ENCODE measurements at regions of chr7 and their contacts with region 1.

Region 1: GRCh38 chr7:134908289-134908688 is 78.0 kb upstream of the AGBL3 start:
- DNase-seq: no peak
- H3K4me3 Mint-ChIP-seq: no peak overlapping the region
- H3K27ac Mint-ChIP-seq: no peak overlapping the region
- H3K4me1 Mint-ChIP-seq: peaks cover 29% of the 10 kb centered on the region
- H3K27me3 Mint-ChIP-seq: no peaks in the 10 kb centered on the region

Region 2: DNA sequence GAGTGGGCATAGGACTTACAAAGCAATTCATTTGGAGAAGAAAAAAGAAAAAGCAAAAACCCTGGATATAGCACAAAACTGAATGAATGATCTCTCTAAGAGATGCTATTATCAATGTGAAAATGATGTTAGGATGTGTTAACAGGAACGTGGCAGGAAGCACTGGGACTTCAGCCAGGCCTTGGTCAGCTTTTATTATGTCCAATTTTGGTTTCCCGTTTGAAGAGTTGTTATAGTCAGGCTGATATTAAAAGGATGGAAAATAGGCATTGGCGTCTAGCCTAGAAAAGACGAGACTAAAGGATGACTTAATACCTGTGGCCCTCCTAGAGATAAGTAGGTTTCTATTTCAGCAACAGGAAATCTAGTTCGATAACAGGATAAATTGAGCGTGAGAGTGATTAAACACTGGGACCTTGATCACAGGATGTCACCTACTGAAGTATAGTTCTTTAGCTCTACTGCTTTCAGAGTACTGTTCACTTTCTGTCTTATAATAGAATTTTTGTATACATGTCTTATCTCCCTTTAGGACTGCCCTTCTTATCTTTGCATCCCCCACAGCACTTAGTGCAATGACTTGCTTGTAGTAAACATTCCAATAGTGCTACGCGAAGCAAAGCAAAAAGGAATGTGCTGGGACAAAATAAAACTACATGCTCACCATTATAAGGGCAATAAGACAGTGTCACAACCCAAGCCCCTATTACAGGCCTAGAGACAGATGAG is 21.8 kb before region 1 on chr7:
- intact Hi-C with region 1: loop called (anchors 2 kb)
- DNase-seq: no peak
- H3K4me3 Mint-ChIP-seq: no peak overlapping the region
- H3K27ac Mint-ChIP-seq: no peak overlapping the region
- H3K4me1 Mint-ChIP-seq: peaks cover 17% of the 10 kb centered on the region
- H3K27me3 Mint-ChIP-seq: no peaks in the 10 kb centered on the region

Region 3: DNA sequence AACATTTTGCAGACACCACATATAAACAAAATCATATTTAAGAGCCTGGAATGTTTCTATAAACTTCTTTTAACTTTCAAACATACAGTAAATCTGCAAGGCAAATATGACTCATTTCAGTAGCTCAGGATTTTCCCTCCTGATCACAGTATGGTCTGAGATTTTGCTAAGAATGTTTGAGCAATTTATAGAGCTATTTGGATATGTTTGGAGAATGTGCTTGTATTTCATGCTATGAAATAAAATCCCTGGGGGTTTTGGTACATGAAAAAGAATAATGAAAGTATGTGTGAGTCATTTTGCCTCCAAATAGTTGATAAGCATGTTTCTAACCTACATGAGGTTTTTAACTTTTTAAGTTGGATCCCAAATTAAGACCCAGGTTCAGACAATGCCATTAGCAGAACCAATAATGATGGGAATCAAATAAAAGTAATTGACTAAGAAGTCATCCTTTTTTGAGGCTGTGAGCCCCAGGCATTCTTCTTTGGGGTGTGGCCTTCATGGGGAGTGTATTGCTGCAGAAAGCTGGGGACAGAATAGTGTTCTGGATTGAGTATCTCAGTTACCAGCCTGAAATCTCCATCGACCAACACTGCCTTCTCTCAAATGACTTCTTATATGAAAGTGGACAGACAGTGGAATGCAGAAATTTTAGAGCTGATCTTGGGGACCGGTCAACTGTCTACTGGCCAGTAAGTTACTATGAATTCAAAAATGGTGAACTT is 11.9 kb after region 1 on chr7:
- intact Hi-C with region 1: loop called (anchors 1 kb)
- DNase-seq: no peak
- H3K4me3 Mint-ChIP-seq: no peak overlapping the region
- H3K27ac Mint-ChIP-seq: no peak overlapping the region
- H3K4me1 Mint-ChIP-seq: peaks cover 17% of the 10 kb centered on the region
- H3K27me3 Mint-ChIP-seq: no peaks in the 10 kb centered on the region